ENCODE measurements at regions of chr12 and their contacts with region 1.

Region 1: DNA sequence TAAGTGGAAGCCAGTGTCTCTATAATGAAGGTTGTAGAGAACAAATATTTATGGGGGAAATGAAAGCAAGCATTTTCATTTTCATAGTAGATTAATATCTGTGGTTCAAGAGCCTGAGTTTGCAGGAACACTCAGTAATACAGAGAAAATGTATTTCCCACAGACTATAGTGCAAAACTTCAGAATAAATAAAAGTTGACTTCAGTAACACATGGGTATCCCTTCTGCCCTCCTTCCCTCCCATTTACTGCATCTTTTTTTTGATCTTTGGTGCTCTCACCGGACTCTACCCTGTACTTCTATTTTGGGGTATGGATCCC is 75.3 kb upstream of the AMN1 start:
- DNase-seq: no peak
- ATAC-seq: peak; percentile 38
- H3K4me3 Mint-ChIP-seq: peak overlapping the region; percentile 70
- H3K27ac Mint-ChIP-seq: peak overlapping the region; percentile 91
- H3K4me1 Mint-ChIP-seq: peaks cover 50% of the 10 kb centered on the region
- H3K27me3 Mint-ChIP-seq: no peaks in the 10 kb centered on the region
- CTCF ChIP-seq: no peak

Region 2: DNA sequence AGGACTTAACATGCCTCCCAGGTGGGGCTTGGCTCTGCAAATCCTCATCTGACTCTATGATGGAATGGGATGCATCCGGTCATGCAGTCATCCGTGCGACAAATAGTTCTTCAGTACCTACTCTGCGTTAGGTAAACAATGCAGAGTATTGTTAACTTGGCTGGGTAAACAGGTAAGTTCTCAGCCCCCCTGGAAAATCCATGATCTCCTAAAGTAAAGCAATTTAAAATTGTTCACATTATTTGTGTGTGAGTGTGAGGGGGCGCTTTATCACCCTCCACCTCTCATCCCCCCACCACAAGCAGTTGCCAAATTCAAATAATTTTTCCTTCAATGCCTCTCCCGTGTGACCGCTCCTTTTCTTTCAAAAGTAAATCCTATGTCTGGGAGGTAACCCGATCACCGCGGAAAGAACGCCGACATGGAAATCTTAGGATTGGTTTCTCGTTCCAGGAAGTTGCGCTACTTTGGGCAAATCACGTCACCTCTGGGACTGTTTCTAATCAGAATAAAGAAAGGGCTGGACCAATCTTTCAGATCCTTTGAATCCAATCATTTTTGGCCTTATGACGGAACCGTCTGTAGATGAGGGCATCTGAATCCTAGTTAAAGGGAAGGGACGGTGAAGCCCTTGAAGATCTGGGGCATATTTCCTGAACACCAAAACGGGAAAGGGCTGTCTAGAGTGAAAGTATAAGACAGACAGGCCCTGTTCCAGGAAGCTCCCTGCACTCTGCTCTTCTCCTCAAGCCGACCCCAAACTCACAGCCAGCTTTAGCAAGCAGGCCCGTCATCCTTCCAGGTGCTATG is 434.2 kb before region 1 on chr12:
- CTCF ChIA-PET with region 1: no interaction called
- POLR2A ChIA-PET with region 1: no interaction called
- intact Hi-C with region 1: no loop called
- DNase-seq: no peak
- ATAC-seq: no peak
- H3K4me3 Mint-ChIP-seq: no peak overlapping the region
- H3K27ac Mint-ChIP-seq: no peak overlapping the region
- H3K4me1 Mint-ChIP-seq: no peaks in the 10 kb centered on the region
- H3K27me3 Mint-ChIP-seq: no peaks in the 10 kb centered on the region
- CTCF ChIP-seq: no peak

Region 3: GRCh38 chr12:31728917-31729640 is 75.1 kb before region 1 on chr12 and contains the start of gene AMN1:
- CTCF ChIA-PET with region 1: interaction called, 3 read pairs
- POLR2A ChIA-PET with region 1: interaction called, 4 read pairs
- intact Hi-C with region 1: loop called (anchors 10 kb)
- DNase-seq: peak; percentile 99
- ATAC-seq: peak; percentile 91
- H3K4me3 Mint-ChIP-seq: peak within 1 kb of the TSS; percentile 95
- H3K27ac Mint-ChIP-seq: peak within 1 kb of the TSS; percentile 99
- H3K4me1 Mint-ChIP-seq: peaks cover 60% of the 10 kb centered on the region
- H3K27me3 Mint-ChIP-seq: no peaks in the 10 kb centered on the region
- CTCF ChIP-seq: no peak
- total RNA-seq, gene AMN1: 3.5 to 4.1 TPM

Region 4: DNA sequence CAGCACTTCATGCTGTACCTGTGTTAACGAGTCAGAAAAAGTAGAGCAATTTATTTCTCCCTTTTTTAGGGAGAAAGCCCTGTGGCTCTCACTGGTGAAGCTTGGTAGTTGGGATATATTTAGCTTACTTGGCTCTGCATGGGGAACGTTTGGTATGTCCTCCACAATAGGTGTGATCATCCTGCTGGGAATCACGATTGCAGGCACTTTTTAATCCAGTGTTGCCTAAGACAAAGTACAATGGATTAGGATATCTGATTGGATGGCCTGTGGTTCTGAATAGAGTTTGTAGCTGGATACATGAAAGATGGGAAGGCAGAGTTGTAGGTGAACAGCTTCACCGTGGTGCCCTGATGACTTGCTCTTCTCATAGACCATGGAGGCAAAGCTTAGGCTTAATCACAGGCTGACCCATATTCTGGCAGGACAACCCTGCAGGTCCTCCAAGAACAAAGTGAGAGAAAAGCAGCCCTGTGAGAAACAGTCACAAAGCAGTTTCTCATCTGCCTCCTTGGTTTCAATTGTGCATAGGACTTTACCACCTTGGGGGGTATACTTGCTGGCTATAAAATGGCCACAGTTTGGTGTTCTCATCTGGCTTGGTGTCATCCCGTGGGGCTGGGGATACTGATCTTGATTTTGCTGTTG is 162.5 kb after region 1 on chr12:
- CTCF ChIA-PET with region 1: no interaction called
- POLR2A ChIA-PET with region 1: interaction called, 4 read pairs
- intact Hi-C with region 1: loop called (anchors 5 kb)
- DNase-seq: peak; percentile 32
- ATAC-seq: peak; percentile 38
- H3K4me3 Mint-ChIP-seq: peak overlapping the region; percentile 83
- H3K27ac Mint-ChIP-seq: peak overlapping the region; percentile 97
- H3K4me1 Mint-ChIP-seq: peaks cover 82% of the 10 kb centered on the region
- H3K27me3 Mint-ChIP-seq: no peaks in the 10 kb centered on the region
- CTCF ChIP-seq: no peak

Measured in activated CD8-positive, alpha-beta T cell treated with anti-CD3 and anti-CD28 coated beads for 36 hours (primary cell).